ENCODE measurements at regions of chr10 and their contacts with region 1.

Region 1: GRCh38 chr10:113297226-113297625 is 255.6 kb upstream of the HABP2 start:
- DNase-seq: peak; percentile 58 to 95
- H3K4me3 ChIP-seq: no peak overlapping the region
- H3K27ac ChIP-seq: peak overlapping the region; percentile 53
- H3K4me1 ChIP-seq: peaks cover 31% of the 10 kb centered on the region
- H3K27me3 ChIP-seq: no peaks in the 10 kb centered on the region
- CTCF ChIP-seq: no peak; the same call in 1 of the 2 replicates

Region 2: DNA sequence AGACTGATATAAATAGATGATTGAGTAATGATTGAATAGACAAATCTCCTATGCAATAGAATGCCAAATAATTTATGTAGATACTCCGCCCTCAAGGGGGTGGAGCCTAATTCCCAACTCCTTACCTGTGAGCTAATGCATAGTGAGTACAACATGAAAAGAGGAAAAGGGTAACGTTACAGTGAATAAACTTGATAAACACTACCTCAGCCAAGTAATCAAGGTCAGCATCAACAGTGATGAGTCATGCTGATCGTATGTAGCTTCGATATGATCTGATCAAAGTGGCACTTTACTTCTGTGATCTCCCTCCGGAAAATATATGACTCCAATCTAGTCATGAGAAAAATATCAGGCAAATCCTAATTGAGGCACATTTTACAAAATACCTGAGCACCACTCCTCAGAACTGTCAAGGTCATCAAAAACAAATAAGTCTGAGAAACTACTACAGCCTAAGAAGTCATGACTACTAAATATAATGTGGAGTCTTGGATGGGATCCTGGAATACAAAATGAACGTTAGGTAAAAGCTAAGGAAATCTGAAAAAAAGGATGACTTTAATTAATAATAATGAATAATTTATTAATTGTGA is 779.7 kb before region 1 on chr10:
- CTCF ChIA-PET with region 1: no interaction called
- POLR2A ChIA-PET with region 1: no interaction called
- intact Hi-C with region 1: loop called (anchors 2 kb)
- DNase-seq: peak; percentile 19 to 85
- H3K4me3 ChIP-seq: no peak overlapping the region
- H3K27ac ChIP-seq: 0 out of 2 replicates have a peak overlapping the region, but pooled peaks have one; percentile 29
- H3K4me1 ChIP-seq: peaks cover 30% of the 10 kb centered on the region
- H3K27me3 ChIP-seq: no peaks in the 10 kb centered on the region
- CTCF ChIP-seq: no peak

Region 3: DNA sequence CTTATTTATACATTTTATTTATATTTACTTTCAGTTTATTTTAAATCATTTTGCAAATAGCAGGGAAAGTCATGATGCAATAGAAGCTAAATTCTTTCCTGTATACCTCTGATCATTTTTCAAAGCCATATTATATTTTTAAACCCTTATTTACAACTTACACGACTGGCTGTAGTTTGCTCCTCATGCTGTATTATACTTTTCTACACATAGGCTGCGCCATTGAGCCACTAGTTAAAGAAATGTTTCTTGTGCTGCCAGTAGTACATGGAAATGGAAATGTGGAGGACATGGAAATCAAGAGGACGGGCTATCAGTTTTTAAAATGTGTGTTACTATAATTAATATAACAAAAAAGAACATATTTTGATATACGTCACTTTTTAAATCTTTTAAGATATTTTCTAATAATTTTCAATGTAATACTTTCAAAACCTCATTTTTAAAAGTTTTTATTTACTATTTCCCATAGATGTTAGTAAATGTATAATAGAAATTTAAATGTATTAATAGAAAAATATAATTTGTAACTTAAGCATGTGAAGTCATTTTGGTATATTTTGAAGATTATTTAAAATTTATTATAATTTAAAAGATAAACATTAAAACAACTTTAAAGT is 731.7 kb before region 1 on chr10:
- CTCF ChIA-PET with region 1: no interaction called
- POLR2A ChIA-PET with region 1: no interaction called
- intact Hi-C with region 1: loop called (anchors 1 kb)
- DNase-seq: peak; percentile 20 to 56
- H3K4me3 ChIP-seq: no peak overlapping the region
- H3K27ac ChIP-seq: no peak overlapping the region
- H3K4me1 ChIP-seq: no peaks in the 10 kb centered on the region
- H3K27me3 ChIP-seq: no peaks in the 10 kb centered on the region
- CTCF ChIP-seq: peak; percentile 73

Region 4: DNA sequence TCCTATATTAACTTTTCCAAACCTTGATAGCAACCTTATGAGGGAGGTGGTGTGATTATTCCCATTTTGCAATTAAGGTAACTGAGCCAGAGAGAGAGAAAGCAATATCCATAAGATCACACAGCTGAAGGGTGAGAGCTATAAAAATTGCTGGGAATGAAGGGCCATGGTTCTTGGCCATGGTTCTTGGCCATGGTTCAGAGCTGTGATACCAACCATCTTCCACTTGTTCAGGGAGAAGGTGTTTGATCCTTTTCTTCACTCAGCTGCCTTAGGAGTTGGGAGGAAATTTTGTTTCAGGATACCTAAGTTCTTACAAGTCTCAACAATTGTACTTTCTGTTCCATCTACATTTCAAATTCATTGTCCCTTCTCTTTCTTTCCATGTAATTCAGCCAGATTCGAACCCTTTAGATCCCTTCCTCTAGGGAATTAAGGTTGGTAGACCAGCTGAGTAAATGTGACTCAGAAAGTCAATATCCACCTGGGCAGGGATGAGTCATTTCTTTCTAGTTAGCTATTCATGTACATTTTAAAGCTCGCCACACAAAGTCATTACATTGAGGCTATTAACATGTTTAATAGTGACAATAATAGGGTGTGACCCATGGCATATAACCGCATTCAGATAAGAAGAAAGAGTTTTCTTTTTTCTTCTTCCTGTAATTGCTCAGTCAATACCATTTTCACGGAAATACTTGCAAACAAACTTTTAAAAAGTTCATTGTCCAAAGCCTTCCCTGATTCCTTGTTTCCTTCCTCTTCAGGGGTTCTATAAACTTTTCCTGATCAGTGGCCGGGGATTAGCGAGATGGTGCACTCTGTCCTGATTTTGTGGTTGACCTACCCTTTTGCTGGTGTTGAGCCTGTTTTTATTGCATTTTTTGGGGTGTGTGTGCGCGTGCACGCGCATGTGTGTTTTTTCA is 203.8 kb before region 1 on chr10:
- CTCF ChIA-PET with region 1: no interaction called
- POLR2A ChIA-PET with region 1: no interaction called
- intact Hi-C with region 1: no loop called
- DNase-seq: peak in 1 of 2 experiments; percentile 91
- H3K4me3 ChIP-seq: peak overlapping the region; percentile 47; the same call in 1 of the 2 replicates
- H3K27ac ChIP-seq: peak overlapping the region; percentile 98
- H3K4me1 ChIP-seq: peaks cover 44% of the 10 kb centered on the region
- H3K27me3 ChIP-seq: no peaks in the 10 kb centered on the region
- CTCF ChIP-seq: no peak

Region 5: GRCh38 chr10:113326160-113327111 is 29.2 kb after region 1 on chr10:
- CTCF ChIA-PET with region 1: no interaction called
- POLR2A ChIA-PET with region 1: no interaction called
- intact Hi-C with region 1: loop called (anchors 1 kb)
- DNase-seq: peak; percentile 54 to 91
- H3K4me3 ChIP-seq: no peak overlapping the region
- H3K27ac ChIP-seq: peak overlapping the region; percentile 85
- H3K4me1 ChIP-seq: peaks cover 21% of the 10 kb centered on the region
- H3K27me3 ChIP-seq: no peaks in the 10 kb centered on the region
- CTCF ChIP-seq: peak; percentile 32; the same call in 1 of the 2 replicates

Region 6: GRCh38 chr10:113337142-113337541 is 39.9 kb after region 1 on chr10:
- CTCF ChIA-PET with region 1: no interaction called
- POLR2A ChIA-PET with region 1: no interaction called
- intact Hi-C with region 1: no loop called
- DNase-seq: no peak
- H3K4me3 ChIP-seq: no peak overlapping the region
- H3K27ac ChIP-seq: no peak overlapping the region
- H3K4me1 ChIP-seq: no peaks in the 10 kb centered on the region
- H3K27me3 ChIP-seq: no peaks in the 10 kb centered on the region
- CTCF ChIP-seq: no peak

Region 7: GRCh38 chr10:113362645-113363433 is 65.6 kb after region 1 on chr10:
- CTCF ChIA-PET with region 1: no interaction called
- POLR2A ChIA-PET with region 1: no interaction called
- intact Hi-C with region 1: loop called (anchors 2 kb)
- DNase-seq: peak in 1 of 2 experiments; percentile 70
- H3K4me3 ChIP-seq: no peak overlapping the region
- H3K27ac ChIP-seq: no peak overlapping the region
- H3K4me1 ChIP-seq: peaks cover 6% of the 10 kb centered on the region; the same call in 1 of the 2 replicates
- H3K27me3 ChIP-seq: no peaks in the 10 kb centered on the region
- CTCF ChIP-seq: no peak

Region 8: GRCh38 chr10:113379091-113379490 is 81.9 kb after region 1 on chr10:
- CTCF ChIA-PET with region 1: no interaction called
- POLR2A ChIA-PET with region 1: no interaction called
- intact Hi-C with region 1: no loop called
- DNase-seq: no peak
- H3K4me3 ChIP-seq: no peak overlapping the region
- H3K27ac ChIP-seq: no peak overlapping the region
- H3K4me1 ChIP-seq: no peaks in the 10 kb centered on the region
- H3K27me3 ChIP-seq: no peaks in the 10 kb centered on the region
- CTCF ChIP-seq: no peak